MCF 10A (cell line): ENCODE measurements at regions of chr11 and their contacts with region 1.

Region 1: DNA sequence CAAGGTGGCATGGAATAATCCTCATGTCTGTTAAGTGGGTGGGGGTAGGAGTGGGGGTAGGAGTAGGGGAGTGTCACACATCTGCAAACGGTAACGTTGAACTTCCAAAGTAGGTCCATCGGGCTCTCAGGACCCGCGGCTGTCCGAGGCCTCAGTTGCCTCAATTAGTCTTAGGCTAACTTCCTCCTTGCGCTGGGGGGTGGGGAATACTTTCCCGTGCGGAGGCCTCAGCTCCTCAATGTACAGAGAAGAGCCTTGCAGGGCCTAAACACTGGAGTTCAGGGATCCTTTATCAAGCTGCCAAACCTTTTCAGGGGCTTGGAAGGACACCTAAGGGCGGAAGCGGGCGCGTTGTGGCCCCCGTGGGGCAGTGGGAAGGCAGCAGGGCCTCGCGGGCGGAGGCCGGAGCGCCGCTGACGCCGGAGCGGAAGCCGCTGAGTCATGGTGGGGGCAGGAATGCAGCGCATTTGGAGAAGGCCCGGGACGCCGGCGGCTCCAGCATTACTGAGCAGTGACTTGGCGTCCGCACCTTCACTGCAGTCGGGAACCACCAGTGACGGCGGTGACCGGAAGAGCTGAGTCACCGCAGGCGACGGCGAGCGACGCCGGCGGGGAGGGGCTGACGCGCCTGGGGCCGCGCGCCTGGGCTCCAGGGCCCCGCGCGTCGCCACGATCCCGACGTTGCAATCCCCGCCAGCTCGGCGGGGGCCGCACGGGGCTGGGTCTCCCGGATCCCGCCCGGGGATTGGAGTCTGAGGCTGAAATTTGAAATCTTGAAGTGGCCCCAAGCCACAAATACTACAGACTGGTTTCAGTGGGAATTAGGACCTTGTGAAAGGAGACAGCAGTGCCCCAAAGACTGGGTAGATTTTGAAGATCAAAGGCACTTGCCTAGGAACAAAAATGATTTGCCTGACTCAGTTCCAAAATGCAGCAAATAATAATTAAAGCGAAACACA is 20.2 kb upstream of the IPO7 start:
- DNase-seq: peak; percentile 95
- H3K4me3 Mint-ChIP-seq: peak overlapping the region; percentile 74
- H3K27ac Mint-ChIP-seq: peak overlapping the region; percentile 98
- H3K4me1 Mint-ChIP-seq: peaks cover 12% of the 10 kb centered on the region
- H3K27me3 Mint-ChIP-seq: no peaks in the 10 kb centered on the region
- CTCF ChIP-seq: no peak

Region 2: DNA sequence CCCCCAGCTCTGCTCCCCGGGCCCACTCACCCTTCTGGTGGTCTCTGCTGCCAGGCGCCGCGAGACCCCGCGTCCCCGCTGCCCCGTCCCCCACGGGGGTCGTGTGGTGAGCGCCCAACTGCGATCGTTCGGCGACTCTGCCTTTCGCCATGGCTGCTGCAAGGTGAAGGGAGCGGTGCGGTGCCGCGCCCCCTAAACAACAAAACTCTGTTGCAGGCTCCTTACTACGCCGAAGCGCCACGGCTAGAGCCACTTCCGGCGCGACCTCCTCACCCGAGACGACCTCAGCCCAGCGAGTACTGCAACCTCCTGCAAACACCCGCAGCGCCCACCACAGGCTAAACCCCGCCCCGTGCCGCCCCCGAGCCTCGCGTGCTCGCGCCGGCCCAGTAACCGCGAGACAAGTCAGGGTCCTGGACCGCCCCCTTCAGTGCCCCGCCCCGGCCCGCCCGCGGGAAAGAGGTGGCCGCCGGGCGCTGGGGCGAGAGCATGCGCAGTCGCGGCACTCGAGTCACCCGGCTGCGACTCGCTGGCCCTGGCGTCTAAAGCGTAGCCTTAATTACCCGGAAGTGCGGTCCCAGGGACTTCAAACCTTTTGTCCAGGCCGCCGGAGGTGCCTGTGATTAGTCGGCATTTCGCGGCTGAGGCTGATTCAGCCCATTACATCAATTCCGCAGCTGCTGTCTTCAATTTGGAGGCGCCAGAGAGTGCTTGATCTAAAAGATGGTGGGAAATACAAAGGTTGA is 49.8 kb before region 1 on chr11 and contains the start of gene TMEM41B:
- CTCF ChIA-PET with region 1: interaction called, 5 read pairs
- POLR2A ChIA-PET with region 1: interaction called, 48 read pairs
- intact Hi-C with region 1: loop called (anchors 1 kb)
- DNase-seq: peak; percentile 99
- H3K4me3 Mint-ChIP-seq: peak within 1 kb of the TSS; percentile 99
- H3K27ac Mint-ChIP-seq: peak within 1 kb of the TSS; percentile 98
- H3K4me1 Mint-ChIP-seq: peaks cover 14% of the 10 kb centered on the region
- H3K27me3 Mint-ChIP-seq: no peaks in the 10 kb centered on the region
- CTCF ChIP-seq: no peak
- total RNA-seq, gene TMEM41B: 50.3 and 72.8 TPM in 2 replicates

Region 3: DNA sequence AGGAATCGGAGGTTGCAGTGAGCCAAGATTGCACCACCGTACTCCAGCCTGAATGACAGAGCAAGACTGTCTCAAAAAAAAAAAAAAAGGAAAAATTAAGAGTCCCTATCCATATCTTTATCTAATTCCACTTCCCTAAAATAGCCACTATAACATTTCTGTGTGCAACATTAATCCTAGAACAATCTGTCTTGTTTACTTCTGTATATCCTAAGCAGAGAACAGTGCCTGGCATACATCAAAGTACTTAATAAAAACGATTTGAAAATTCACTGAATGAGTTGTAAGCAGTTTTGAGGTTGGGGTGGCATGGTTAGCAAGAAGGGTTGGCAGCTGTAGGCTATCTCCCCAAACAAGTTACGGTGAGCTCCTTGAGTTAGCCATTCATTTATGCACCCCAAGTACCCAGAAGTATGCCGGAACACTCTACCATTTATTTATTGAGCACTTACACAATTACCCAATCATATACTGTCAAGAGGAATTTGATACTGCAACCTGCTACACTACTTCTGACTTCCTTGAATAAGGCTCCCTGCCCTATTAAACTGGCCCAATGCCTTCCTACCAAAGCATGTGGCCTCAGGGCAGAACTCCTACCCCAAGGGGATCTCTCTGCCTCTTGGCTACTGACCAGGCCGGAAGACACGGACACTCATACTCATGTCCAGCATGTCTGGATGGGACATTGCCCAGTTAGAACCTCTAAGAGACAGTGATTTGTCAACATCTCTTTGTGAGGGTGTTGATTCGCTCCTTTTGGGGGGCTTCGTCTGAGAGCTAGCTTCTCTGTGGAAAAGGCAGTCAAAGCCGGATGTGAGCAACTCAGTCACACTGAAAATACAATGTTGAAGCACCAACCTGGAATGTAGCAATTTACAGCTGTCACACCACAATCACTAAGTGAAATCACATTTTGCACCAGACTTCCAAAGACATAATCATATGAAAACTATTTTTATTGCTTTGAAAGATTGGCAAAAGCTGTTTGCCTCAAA is 33.5 kb before region 1 on chr11:
- CTCF ChIA-PET with region 1: no interaction called
- POLR2A ChIA-PET with region 1: no interaction called
- intact Hi-C with region 1: no loop called
- DNase-seq: peak; percentile 46
- H3K4me3 Mint-ChIP-seq: no peak overlapping the region
- H3K27ac Mint-ChIP-seq: peak overlapping the region; percentile 57
- H3K4me1 Mint-ChIP-seq: peaks cover 15% of the 10 kb centered on the region
- H3K27me3 Mint-ChIP-seq: no peaks in the 10 kb centered on the region
- CTCF ChIP-seq: no peak